ENCODE measurements at regions of chr11 and their contacts with region 1.

Region 1: GRCh38 chr11:120229451-120230424 is 10.2 kb upstream of the POU2F3 start:
- DNase-seq: no peak

Region 2: GRCh38 chr11:120172054-120172911 is 57.5 kb before region 1 on chr11:
- CTCF ChIA-PET with region 1: interaction called, 11 read pairs
- POLR2A ChIA-PET with region 1: no interaction called
- DNase-seq: peak; percentile 84

Region 3: GRCh38 chr11:120180551-120181232 is 49.0 kb before region 1 on chr11:
- CTCF ChIA-PET with region 1: interaction called, 15 read pairs
- POLR2A ChIA-PET with region 1: no interaction called
- DNase-seq: no peak

Region 4: DNA sequence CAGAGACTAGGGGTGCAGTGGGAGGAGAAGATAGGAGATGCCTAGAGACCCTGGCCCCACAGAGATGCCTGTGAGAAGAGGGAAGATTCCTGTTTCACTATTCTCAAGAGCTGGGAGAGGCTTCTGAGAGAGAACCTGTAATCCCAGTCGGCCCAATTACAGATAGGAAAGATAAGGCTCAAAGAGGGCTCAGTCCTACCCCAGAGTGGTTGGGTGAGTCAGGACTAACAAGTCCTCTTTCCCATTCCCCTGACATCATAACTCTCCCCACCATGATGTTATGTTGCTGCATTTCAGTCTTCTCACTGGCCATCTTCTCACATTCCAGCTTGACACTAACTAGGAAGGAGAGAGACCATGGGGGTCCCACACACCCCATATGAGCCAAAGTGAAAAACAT is 124.3 kb after region 1 on chr11:
- CTCF ChIA-PET with region 1: no interaction called
- POLR2A ChIA-PET with region 1: no interaction called
- DNase-seq: no peak

Measured in HEK293T (cell line).